Left lung (tissue), 14 donors: ENCODE measurements at regions of chr12 and their contacts with region 1.

Region 1: DNA sequence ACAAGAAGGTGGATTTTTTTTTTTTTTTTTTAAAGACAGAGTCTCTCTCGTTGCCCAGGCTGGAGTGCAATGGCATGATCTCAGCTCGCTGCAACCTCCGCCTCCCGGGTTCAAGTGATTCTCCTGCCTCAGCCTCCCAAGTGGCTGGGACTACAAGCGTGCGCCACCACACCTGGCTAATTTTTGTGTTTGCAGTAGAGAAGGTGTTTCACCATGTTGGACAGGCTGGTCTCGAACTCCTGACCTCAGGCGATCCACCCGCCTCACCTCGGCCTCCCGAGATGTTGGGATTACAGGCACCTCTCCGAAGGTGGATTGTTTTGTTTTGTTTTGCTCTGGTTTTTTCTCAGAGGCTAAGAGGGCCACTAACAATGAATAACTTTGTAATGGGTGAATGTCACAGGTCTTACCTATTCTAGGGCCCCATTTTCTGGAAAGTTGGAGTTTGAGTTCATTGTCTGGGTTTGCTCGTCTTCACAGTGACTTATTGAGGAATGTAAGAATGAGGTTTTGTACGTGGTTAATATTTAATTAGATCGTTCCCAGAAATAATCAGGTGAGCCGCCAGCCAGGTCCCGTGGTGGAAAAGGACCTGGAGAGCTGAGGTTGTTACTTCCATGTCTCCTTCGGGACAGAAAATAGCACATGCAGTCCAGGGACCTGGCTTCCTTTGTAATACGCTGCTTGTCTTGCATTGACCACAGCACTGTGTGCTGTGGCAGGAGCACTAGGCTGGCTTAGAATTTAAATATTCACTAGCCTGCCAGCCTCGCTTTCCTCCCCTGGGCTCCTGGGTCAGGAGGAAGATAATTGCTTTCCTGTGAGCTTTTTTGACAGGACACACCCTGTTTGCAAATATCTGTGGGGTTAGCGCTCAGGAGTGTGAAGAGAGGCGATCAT is 2.3 kb downstream of the HIP1R start:
- DNase-seq: no peak
- ATAC-seq: peak; percentile 14
- H3K4me3 ChIP-seq: peak overlapping the region in 1 of 2 donors; percentile 56
- H3K27ac ChIP-seq: peak overlapping the region; percentile 9 to 27
- H3K4me1 ChIP-seq: peaks cover 7 to 46% of the 10 kb centered on the region in 2 donors
- H3K27me3 ChIP-seq: peaks cover 0 to 25% of the 10 kb centered on the region in 2 donors
- CTCF ChIP-seq: no peak

Region 2: DNA sequence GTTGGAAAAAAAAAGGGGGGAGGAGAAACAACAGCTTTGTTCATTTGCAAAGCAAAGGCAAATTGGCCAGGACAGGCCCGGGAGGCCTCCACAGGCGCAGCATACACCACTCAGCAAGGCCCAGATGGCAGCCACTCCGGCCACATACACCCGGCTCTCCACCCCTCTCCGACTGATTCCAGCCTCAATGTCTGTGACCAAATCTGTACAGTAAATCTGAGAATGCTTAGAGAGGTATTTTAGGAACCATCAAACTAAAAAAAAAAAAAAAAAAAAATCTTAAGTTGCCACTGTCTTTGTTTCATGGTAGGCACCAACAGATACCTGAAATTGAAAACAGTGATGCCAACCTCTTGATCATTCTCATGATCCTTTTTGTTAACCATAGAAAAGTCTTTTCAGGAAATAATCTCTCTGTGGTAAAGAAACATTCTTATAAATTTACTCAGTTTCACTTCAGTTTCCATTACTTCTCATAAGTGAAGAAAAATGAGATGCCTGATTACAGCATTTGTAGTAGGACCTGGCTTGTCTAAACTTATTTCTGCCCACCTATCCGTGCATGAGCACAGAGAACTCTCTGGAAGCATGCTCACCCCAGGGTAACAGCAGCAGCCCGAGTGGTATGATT is 38.1 kb after region 1 on chr12:
- intact Hi-C with region 1: loop called in 1 of 2 experiments (anchors 2 kb)
- DNase-seq: no peak
- ATAC-seq: no peak
- H3K4me3 ChIP-seq: no peak overlapping the region
- H3K27ac ChIP-seq: no peak overlapping the region
- H3K4me1 ChIP-seq: peaks cover 50 to 99% of the 10 kb centered on the region in 2 donors
- H3K27me3 ChIP-seq: no peaks in the 10 kb centered on the region
- CTCF ChIP-seq: no peak